Caco-2 (cell line): ENCODE measurements at regions of chr2 and their contacts with region 1.

Region 1: GRCh38 chr2:143259368-143259958 is 130.2 kb downstream of the ARHGAP15 start:
- DNase-seq: peak; percentile 61 to 66
- H3K4me3 ChIP-seq: no peak overlapping the region
- H3K4me3 Mint-ChIP-seq: no peak overlapping the region
- H3K27ac Mint-ChIP-seq: no peak overlapping the region
- H3K4me1 ChIP-seq: no peaks in the 10 kb centered on the region
- H3K4me1 Mint-ChIP-seq: no peaks in the 10 kb centered on the region
- H3K27me3 ChIP-seq: no peaks in the 10 kb centered on the region
- H3K27me3 Mint-ChIP-seq: peaks cover 9% of the 10 kb centered on the region
- CTCF ChIP-seq: peak; percentile 79 to 82

Region 2: GRCh38 chr2:143034292-143035074 is 225.0 kb before region 1 on chr2:
- CTCF ChIA-PET with region 1: interaction called, 3 read pairs
- POLR2A ChIA-PET with region 1: no interaction called
- intact Hi-C with region 1: loop called (anchors 1 kb)
- DNase-seq: peak; percentile 61 to 69
- H3K4me3 ChIP-seq: no peak overlapping the region
- H3K4me3 Mint-ChIP-seq: no peak overlapping the region
- H3K27ac Mint-ChIP-seq: no peak overlapping the region
- H3K4me1 ChIP-seq: peaks cover 12% of the 10 kb centered on the region
- H3K4me1 Mint-ChIP-seq: peaks cover 10% of the 10 kb centered on the region
- H3K27me3 ChIP-seq: no peaks in the 10 kb centered on the region
- H3K27me3 Mint-ChIP-seq: no peaks in the 10 kb centered on the region
- CTCF ChIP-seq: peak; percentile 93

Region 3: GRCh38 chr2:143110758-143111428 is 148.6 kb before region 1 on chr2:
- CTCF ChIA-PET with region 1: interaction called, 9 read pairs
- POLR2A ChIA-PET with region 1: no interaction called
- intact Hi-C with region 1: loop called (anchors 1 kb)
- DNase-seq: peak; percentile 43 to 59
- H3K4me3 ChIP-seq: no peak overlapping the region
- H3K4me3 Mint-ChIP-seq: no peak overlapping the region
- H3K27ac Mint-ChIP-seq: no peak overlapping the region
- H3K4me1 ChIP-seq: no peaks in the 10 kb centered on the region
- H3K4me1 Mint-ChIP-seq: no peaks in the 10 kb centered on the region
- H3K27me3 ChIP-seq: no peaks in the 10 kb centered on the region
- H3K27me3 Mint-ChIP-seq: peaks cover 8% of the 10 kb centered on the region
- CTCF ChIP-seq: peak; percentile 66 to 72

Region 4: GRCh38 chr2:143132355-143132754 is 127.1 kb before region 1 on chr2:
- CTCF ChIA-PET with region 1: no interaction called
- POLR2A ChIA-PET with region 1: no interaction called
- intact Hi-C with region 1: no loop called
- DNase-seq: no peak
- H3K4me3 ChIP-seq: no peak overlapping the region
- H3K4me3 Mint-ChIP-seq: no peak overlapping the region
- H3K27ac Mint-ChIP-seq: no peak overlapping the region
- H3K4me1 ChIP-seq: no peaks in the 10 kb centered on the region
- H3K4me1 Mint-ChIP-seq: no peaks in the 10 kb centered on the region
- H3K27me3 ChIP-seq: no peaks in the 10 kb centered on the region
- H3K27me3 Mint-ChIP-seq: peaks cover 12% of the 10 kb centered on the region
- CTCF ChIP-seq: no peak

Region 5: DNA sequence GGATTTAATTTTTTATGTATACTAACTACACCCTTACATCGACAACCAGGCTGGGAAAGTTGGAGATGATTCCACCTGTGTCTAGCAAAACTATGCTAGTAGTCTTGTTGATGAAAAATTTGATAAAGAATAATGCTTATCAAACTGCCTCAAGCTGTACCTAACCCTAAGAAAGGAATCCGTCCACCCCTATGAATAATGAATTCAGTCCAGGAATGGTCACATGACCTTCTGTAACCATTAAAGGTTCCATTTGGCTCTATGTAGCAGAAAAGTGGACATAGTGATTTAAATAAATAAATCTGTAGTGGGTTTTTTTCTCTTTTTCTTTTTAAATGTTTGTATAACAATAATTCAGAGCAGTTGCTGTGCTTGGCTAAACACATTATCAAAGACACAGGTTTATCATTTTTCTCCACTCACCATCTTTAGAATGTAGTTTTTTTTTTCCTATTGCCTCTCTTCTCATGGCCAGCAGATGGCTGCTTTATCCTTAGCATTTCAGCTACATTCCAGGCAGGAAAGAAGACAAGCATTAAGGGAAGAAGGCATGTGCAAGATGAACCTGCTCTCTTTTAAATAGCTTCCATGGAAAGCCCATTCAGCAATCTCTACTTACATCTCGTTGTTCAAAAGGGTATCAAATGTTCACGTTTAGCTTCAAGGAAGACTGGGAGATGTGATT is 87.8 kb before region 1 on chr2:
- CTCF ChIA-PET with region 1: no interaction called
- POLR2A ChIA-PET with region 1: no interaction called
- intact Hi-C with region 1: loop called (anchors 1 kb)
- DNase-seq: peak in 1 of 2 experiments; percentile 5
- H3K4me3 ChIP-seq: no peak overlapping the region
- H3K4me3 Mint-ChIP-seq: no peak overlapping the region
- H3K27ac Mint-ChIP-seq: no peak overlapping the region
- H3K4me1 ChIP-seq: no peaks in the 10 kb centered on the region
- H3K4me1 Mint-ChIP-seq: no peaks in the 10 kb centered on the region
- H3K27me3 ChIP-seq: 0 out of 2 replicates have a peak, but pooled peaks cover 2% of the 10 kb centered on the region
- H3K27me3 Mint-ChIP-seq: peaks cover 14% of the 10 kb centered on the region
- CTCF ChIP-seq: peak; percentile 21 to 50

Region 6: GRCh38 chr2:143205106-143205764 is 54.2 kb before region 1 on chr2:
- CTCF ChIA-PET with region 1: no interaction called
- POLR2A ChIA-PET with region 1: no interaction called
- intact Hi-C with region 1: loop called (anchors 1 kb)
- DNase-seq: no peak
- H3K4me3 ChIP-seq: no peak overlapping the region
- H3K4me3 Mint-ChIP-seq: no peak overlapping the region
- H3K27ac Mint-ChIP-seq: no peak overlapping the region
- H3K4me1 ChIP-seq: no peaks in the 10 kb centered on the region
- H3K4me1 Mint-ChIP-seq: no peaks in the 10 kb centered on the region
- H3K27me3 ChIP-seq: no peaks in the 10 kb centered on the region
- H3K27me3 Mint-ChIP-seq: peaks cover 14% of the 10 kb centered on the region
- CTCF ChIP-seq: peak; percentile 25 to 39

Region 7: DNA sequence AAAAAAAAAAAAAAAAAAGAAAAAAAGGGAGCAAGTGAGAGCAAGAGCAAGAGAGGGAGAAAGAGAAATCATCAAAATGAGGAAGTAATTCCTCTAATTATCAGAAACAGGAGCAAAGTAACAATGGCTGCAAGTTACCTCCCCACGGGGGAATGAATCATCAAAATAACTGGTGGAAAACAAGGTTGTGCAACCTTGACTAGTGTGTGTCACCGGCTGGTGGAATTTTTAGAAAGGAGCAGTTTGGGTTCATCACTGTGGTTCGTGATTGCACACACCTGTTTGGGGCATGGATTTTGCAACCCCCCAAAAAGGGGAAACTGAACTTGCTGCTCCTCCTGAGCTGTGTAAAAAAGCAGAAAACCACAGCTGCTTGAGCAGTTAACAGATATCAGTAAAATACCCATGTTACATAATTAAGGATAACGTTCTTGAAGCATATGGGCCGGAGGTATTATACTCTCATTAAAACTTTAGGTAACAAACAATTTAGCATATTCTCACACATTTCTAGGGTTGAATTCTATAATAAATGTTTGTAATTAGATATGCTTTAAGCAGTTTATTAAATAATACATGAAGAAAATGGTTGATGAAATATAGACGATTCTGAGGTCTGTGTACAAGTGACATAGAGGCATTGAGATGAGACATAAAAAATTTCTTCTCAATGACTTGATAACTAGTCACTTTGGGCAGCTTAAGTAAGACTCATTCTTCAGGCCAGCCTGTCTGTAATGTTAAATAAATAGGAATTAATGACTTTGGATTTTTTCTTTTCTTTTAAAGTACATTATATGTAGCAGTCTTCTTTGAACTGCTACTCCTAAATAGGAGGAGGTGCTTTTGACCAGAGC is 1444.6 kb after region 1 on chr2:
- CTCF ChIA-PET with region 1: no interaction called
- POLR2A ChIA-PET with region 1: no interaction called
- intact Hi-C with region 1: no loop called
- DNase-seq: no peak
- H3K4me3 ChIP-seq: no peak overlapping the region
- H3K4me3 Mint-ChIP-seq: no peak overlapping the region
- H3K27ac Mint-ChIP-seq: no peak overlapping the region
- H3K4me1 ChIP-seq: no peaks in the 10 kb centered on the region
- H3K4me1 Mint-ChIP-seq: peaks cover 7% of the 10 kb centered on the region
- H3K27me3 ChIP-seq: no peaks in the 10 kb centered on the region
- H3K27me3 Mint-ChIP-seq: no peaks in the 10 kb centered on the region
- CTCF ChIP-seq: no peak